Cardiac septum (tissue), 1 donor: ENCODE measurements at regions of chr6 and their contacts with region 1.

Region 1: DNA sequence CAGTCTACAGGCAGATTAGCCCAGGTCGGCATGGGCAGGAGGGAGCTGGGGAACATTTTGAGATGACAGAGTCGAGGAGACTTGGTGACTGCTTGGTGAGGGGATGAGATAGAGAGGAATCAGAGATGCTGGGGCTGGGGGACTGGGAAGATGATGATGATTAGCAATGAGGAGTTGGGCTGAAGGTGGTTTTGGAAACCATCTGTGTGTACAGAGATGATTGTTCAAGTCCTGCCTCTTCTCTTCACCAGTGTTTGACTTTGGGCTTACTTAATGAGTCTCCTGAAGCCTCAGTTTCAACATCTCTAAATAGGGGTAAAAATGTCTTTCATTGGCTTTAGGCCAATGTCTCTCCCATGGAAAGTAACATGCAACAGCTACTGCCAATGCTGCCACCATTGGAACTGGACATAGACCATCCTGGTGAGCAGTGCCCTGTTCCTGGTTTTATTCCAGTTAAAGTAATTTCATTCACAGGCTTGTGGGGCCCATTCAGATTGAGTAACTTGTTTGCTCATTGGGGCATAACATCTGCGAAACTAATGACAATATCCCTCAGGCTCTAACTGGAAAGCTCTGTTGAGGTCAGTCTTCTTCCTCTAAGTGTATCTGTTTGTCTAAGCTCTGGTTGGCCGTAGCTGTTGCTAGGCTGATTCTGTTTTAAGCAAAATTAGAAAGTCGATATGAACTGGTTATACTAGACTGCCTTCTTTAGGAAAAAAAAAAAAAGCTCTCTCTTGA is 99.1 kb downstream of the ARMC2 start:
- DNase-seq: no peak

Region 2: GRCh38 chr6:108848116-108848868 is 99.0 kb before region 1 on chr6 and contains the start of gene ARMC2:
- intact Hi-C with region 1: loop called (anchors 5 kb)
- DNase-seq: peak; percentile 99
- total RNA-seq, gene ARMC2: 11.0 TPM

Region 3: DNA sequence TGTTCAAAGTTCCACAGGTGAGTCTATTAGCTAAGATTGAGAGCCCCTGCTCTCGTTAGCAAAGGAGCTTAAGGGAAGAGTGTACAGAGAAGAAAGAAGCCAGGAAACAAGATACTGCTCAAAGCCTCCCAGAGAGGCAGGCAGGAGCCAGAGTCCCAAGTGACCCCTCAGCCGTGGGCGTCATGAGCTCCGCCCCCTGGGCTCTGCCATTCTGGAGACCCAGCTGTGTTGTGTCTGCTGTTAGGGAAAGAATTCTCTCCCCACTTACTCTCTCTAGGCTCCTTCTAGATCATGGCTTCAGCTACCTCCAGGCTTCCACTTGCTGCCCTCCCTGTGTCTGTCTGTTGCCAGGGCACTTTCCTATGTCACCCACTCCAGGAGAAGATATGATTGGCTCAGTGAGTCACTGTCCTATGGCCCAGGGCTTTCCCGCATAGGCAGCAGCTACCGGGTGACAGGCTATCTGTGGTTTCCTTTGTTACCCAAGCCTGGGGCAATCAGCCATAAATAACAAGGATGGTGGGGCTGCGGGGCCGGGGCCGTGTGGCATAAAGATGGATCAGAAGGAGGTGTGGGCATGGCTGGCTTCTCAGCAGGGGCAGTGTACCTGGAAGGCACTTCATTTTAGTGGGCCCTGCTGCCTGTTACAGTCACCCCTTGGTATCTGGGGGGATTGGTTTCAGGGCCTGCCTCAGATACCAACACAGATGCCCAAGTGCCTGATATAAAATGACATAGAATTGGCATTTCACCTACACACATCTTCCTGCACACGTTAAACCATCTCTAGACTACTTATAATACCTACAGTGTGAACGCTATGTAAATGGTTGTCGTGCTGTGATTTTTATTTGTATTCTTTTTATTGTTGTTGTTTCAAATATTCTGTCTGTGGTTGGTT is 19.8 kb after region 1 on chr6:
- intact Hi-C with region 1: loop called (anchors 2 kb)
- DNase-seq: peak; percentile 85

Region 4: GRCh38 chr6:109059571-109060021 is 112.3 kb after region 1 on chr6:
- intact Hi-C with region 1: loop called (anchors 2 kb)
- DNase-seq: no peak

Region 5: DNA sequence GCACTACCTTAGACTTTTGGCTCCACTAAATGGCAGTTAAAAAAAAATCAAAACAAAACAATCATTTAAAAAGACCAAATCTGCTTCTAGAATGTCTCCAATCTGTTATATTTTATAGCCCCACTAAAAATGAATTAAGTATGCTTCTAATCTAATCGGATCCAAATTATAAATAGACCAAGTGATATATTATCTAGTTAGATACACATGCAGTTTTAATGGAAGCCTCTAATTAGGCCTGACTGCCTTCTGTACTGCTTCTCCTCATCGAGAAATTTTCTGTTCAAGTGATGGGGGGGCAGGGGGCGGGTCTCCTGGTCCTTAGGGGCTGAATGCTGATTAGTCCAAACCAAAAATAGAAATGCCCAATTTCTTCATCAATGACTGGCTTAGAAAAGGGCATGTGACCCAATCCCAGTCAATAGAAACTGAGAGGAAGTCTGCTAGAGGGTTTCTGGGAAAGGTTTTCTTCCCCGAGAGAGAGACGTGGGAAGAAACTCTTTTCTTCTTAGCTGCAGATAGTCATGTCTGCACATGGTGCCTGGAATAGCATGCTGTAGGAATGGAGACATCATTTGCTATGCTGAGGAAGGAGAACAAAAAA is 140.5 kb after region 1 on chr6:
- intact Hi-C with region 1: loop called (anchors 5 kb)
- DNase-seq: no peak